ENCODE measurements at regions of chr6 and their contacts with region 1.

Region 1: DNA sequence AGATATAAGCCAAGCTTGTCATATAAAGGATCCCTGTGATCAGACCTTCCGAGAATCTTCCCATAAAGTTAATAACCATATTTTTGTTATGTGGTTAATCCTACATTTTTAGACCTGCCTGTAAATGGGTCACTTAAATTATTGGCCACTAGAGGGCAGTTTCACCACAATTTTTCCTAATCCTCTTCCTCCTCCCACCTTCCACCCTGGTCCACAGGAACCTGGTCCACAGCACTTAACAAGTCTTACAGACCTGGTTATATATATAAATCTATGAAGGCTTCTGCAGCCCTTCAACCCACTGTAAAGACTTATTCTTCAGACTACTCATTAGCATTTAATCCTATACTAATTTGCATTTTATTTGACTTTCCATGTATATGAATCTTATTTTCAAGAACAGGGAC is 28.3 kb downstream of the MRS2 start:
- DNase-seq: no peak
- ATAC-seq: peak; percentile 83

Region 2: GRCh38 chr6:24245275-24245674 is 185.8 kb before region 1 on chr6:
- intact Hi-C with region 1: no loop called
- DNase-seq: no peak
- ATAC-seq: no peak

Region 3: GRCh38 chr6:24517659-24518543 is 86.9 kb after region 1 on chr6:
- intact Hi-C with region 1: loop called (anchors 10 kb)
- DNase-seq: no peak
- ATAC-seq: no peak

Region 4: GRCh38 chr6:24699521-24700359 is 268.7 kb after region 1 on chr6:
- intact Hi-C with region 1: loop called (anchors 10 kb)
- DNase-seq: no peak
- ATAC-seq: no peak

Measured in Right ventricle myocardium superior (tissue), 1 donor.